ENCODE measurements at regions of chr4 and their contacts with region 1.

Region 1: GRCh38 chr4:81471588-81472288 is at the start of gene RASGEF1B:
- DNase-seq: peak; percentile 57 to 97 (median 91)
- H3K4me3 ChIP-seq: peak within 1 kb of the TSS; percentile 60 to 98 (median 90)
- H3K27ac ChIP-seq: peak within 1 kb of the TSS; percentile 49 to 97 (median 93)
- H3K27me3 ChIP-seq: no peaks in the 10 kb centered on the region
- CTCF ChIP-seq: peak in 18 of 56 donors; percentile 3 to 45 (median 20)
- total RNA-seq, gene RASGEF1B: 8.3 to 27.8 (median 17.8) TPM

Region 2: DNA sequence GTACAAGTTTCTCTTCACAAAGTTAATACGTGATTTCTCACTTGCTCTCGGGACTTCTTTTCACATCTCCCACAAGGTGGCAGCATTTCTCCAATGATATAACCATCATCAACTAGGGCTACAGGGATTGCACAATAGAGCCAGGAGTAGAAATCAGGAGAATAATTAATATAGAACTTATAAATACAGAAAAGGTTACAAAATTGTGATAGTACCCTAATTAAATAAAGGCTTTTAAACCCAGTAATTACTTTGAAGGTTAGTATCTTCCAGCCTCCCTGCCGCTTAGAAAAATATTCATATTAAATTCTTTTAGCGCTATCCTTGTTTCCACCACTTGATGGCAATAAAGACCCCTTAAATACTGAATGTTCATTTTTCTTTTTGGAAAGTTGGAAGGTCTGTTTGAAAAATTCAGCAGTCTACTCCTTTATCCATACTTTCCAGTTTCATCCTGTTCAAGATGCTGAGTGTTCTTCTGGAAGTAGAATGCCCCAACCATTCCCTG is 65.8 kb before region 1 on chr4:
- intact Hi-C with region 1: loop called (anchors 5 kb)
- DNase-seq: peak in 4 of 10 donors; percentile 24 to 57 (median 48)
- H3K4me3 ChIP-seq: peak overlapping the region in 47 of 59 donors; percentile 10 to 59 (median 35)
- H3K27ac ChIP-seq: peak overlapping the region in 25 of 59 donors; percentile 17 to 80 (median 55)
- H3K27me3 ChIP-seq: no peaks in the 10 kb centered on the region
- CTCF ChIP-seq: peak; percentile 77 to 100 (median 95)

Region 3: DNA sequence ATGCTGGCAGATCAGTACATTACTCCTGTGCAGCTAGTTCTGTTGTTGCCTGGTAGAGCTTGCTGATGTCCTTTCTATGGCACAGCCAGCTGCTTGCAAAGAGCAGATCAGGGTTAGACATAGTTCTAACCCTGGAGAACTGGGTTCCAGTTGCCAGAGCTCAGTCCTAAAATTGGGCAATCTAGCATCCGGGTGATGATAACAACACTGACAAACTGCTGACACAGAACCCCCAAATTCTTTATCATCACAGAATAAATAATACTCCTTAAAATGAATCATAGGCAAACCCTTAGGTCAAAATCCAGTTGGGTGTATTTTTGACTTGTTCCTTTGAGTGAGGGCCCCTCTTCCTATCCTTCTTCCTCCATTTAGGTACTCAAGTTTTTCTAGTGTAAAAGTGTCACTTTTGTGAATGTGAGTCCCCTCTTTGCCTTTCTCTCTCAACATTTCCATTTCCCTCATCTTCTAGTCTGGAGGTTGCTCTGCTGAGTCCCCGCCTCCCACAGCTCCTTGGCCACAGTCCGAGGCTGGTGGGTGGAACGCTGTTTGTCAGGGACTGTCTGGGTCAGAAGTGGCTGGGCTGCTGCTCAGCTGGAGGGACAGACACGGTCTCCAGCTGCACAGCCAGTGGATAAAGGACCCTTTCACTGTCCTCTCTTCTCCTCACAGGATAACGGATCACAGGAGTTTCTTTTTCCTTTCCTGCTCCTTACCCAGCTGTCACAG is 93.6 kb after region 1 on chr4:
- intact Hi-C with region 1: loop called (anchors 2 to 5 kb)
- DNase-seq: peak; percentile 20 to 85 (median 76)
- H3K4me3 ChIP-seq: peak overlapping the region; percentile 3 to 67 (median 45)
- H3K27ac ChIP-seq: peak overlapping the region in 49 of 59 donors; percentile 3 to 77 (median 64)
- H3K27me3 ChIP-seq: no peaks in the 10 kb centered on the region
- CTCF ChIP-seq: peak in 3 of 56 donors; percentile 12 to 19 (median 14)

Region 4: DNA sequence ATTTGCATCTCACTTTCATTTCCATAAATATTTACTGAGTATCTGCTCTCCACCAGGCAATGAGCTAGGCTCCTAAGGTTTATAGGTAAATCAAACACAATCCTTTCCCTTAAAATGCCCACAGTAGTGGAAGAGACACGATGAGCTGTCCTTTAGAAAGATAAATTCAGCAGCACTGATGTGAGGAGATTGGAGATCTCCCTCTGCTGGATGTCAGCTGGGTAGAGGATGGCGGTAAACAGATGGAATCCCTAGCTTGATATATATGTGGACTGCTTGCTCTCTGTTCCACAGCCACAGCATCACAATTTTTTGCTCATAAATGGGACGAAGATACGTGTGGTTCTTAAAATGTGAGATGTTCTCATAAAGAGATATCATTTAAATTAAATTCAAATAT is 216.3 kb after region 1 on chr4:
- intact Hi-C with region 1: loop called in 1 of 2 experiments (anchors 2 kb)
- DNase-seq: peak in 1 of 10 donors; percentile 14
- H3K4me3 ChIP-seq: no peak overlapping the region
- H3K27ac ChIP-seq: no peak overlapping the region
- H3K27me3 ChIP-seq: no peaks in the 10 kb centered on the region
- CTCF ChIP-seq: peak in 48 of 56 donors; percentile 10 to 69 (median 44)

Region 5: DNA sequence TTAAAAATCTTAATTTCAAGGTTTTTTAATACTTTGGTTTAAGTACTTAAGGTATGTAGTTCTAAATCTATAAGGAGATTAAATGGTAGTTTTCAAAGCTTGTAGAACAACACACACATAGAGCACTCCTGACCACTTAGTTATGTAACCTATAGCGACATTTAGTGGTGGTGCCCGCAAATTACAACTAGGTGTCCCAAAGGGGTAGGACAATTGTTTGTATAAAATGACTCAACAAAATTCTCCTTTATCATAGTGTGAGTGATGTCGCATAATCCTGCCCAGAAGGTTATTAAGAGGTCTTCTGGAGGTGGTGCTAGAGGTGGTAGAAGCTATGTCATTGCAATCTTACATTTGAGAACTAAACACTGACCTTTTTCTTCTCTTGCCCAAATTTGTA is 373.0 kb after region 1 on chr4:
- intact Hi-C with region 1: loop called (anchors 2 to 5 kb)
- DNase-seq: peak in 8 of 10 donors; percentile 46 to 88 (median 62)
- H3K4me3 ChIP-seq: no peak overlapping the region
- H3K27ac ChIP-seq: no peak overlapping the region
- H3K27me3 ChIP-seq: no peaks in the 10 kb centered on the region
- CTCF ChIP-seq: peak; percentile 63 to 96 (median 85)